Activated B cell treated with CpG ODN at 0.5 μM for 24 hours (primary cell): ENCODE measurements at regions of chr10 and their contacts with region 1.

Region 1: DNA sequence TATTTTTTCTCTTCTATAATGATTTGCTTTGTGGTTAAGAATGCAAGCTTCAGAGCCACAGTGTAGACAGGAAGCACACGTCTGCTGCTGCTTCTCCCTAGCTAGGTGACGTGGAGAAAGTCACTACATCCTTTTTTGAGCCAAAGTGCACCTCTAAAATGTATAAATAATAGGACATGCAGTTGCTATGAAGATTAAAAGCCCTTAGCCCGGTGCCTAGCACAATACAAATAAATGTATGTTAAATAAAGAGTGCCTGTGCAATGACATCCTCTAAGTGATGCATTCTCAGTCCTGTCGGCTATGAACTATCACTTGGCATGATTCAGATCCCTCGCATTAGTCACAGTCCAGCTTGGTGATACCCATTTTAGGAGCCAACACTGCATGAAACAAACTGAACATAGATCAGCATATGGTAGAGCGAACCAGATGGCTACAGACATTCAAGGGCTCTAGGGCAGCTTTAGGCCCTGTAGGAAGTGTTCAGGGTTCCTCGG is 4.8 kb upstream of the TRDMT1 start:
- DNase-seq: no peak
- ATAC-seq: peak; percentile 62
- H3K4me3 Mint-ChIP-seq: peak overlapping the region; percentile 13
- H3K27ac Mint-ChIP-seq: peak overlapping the region; percentile 88
- H3K4me1 Mint-ChIP-seq: peaks cover 29% of the 10 kb centered on the region
- H3K27me3 Mint-ChIP-seq: no peaks in the 10 kb centered on the region
- CTCF ChIP-seq: no peak

Region 2: DNA sequence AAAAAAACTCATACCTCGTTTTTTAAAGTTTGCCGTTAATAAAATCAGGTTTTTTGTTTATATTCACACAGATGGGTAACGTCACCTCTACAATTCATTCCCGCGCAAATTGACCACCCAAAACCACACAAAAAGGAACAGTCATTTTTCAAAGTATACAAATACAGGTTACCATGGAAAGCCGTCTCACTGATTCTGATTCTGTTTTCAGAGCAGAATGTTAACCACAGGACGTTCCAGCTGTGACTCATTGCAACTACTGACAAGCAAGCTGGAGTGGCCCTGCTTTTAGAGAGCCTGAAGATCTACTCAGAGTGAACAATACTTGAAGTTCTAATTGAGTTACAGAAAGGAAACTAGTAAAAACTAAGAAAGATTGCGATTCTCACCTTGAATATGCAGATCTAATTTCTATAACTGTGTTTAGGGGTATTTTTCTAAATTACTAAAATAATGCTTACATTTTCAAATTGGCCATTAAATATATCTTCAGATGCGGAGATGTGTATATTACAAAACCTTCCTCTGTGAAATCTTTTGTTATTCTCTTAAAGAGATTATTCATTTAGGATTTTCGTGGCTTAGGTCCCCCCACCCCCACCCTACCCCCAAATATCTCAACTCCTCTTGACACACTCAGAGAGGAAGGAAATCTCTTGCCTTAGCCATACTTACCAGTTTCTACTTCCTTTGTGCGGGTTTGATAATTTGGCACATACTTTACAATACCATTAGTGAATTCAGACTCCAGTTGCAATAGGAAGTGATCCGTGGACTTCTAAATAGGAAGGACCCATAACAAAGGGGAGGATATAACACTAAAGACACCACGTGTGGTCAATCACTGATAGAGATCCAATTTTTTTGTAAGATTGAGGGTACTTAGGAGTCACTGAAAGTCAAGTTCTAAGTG is 182.6 kb before region 1 on chr10:
- CTCF ChIA-PET with region 1: no interaction called
- POLR2A ChIA-PET with region 1: no interaction called
- intact Hi-C with region 1: loop called (anchors 1 kb)
- DNase-seq: no peak
- ATAC-seq: peak; percentile 78
- H3K4me3 Mint-ChIP-seq: peak overlapping the region; percentile 15
- H3K27ac Mint-ChIP-seq: peak overlapping the region; percentile 9
- H3K4me1 Mint-ChIP-seq: peaks cover 32% of the 10 kb centered on the region
- H3K27me3 Mint-ChIP-seq: peaks cover 2% of the 10 kb centered on the region
- CTCF ChIP-seq: no peak

Region 3: DNA sequence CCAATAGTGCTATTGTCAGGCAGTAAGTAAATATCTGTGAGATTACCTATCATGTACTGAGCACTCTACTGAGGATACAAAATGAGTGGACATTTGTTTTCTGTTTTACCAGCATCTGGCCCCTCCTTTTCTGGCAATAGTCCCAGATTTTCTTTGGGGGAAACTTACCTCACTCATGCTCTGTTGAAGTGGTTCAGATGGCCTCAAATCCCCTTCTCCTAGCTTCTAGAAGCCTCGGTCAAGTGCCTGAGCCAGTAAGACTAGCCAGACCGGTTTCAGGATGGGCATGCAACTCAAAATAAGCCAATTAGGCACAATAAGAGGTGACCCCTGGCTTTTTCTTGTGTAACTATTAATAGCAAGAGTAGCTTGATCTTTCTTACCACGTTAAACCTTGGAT is 24.5 kb before region 1 on chr10:
- CTCF ChIA-PET with region 1: no interaction called
- POLR2A ChIA-PET with region 1: interaction called, 10 read pairs
- intact Hi-C with region 1: loop called (anchors 2 kb)
- DNase-seq: no peak
- ATAC-seq: no peak
- H3K4me3 Mint-ChIP-seq: no peak overlapping the region
- H3K27ac Mint-ChIP-seq: no peak overlapping the region
- H3K4me1 Mint-ChIP-seq: peaks cover 6% of the 10 kb centered on the region
- H3K27me3 Mint-ChIP-seq: no peaks in the 10 kb centered on the region
- CTCF ChIP-seq: no peak

Region 4: DNA sequence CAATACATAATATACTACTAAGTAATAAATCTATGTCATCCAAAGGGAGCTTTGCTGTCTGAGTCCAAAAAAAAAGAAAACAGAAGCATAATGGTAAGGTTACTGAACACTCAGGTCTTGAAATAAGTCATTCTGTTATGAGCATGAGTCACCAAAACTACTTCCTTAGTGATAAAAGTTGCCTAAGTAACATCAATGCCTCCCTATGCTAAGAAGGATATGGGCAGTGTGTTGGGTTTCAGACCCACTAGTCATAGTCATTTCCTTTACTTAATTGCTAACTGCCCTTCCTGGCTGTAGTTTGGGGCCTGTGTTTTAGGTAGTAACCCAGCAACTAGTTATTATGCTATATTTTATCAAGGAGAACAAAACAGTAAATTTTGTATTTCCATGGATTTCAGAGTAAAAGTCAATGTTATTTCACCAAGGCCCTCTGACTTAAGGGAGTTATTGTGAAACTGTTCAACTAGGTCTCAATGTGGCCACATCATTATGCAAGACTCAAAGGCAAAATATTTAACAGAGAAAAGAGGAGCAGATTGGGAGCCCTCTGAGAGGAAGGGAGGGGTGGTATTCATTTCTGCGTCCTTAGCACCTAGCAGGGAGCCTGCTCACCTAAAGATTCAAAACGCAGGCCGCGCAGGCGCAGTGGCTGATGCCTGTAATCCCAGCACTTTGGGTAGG is 10.1 kb after region 1 on chr10:
- CTCF ChIA-PET with region 1: interaction called, 5 read pairs
- POLR2A ChIA-PET with region 1: interaction called, 14 read pairs
- intact Hi-C with region 1: loop called (anchors 1 kb)
- DNase-seq: no peak
- ATAC-seq: peak; percentile 96
- H3K4me3 Mint-ChIP-seq: peak overlapping the region; percentile 46
- H3K27ac Mint-ChIP-seq: peak overlapping the region; percentile 90
- H3K4me1 Mint-ChIP-seq: peaks cover 24% of the 10 kb centered on the region
- H3K27me3 Mint-ChIP-seq: no peaks in the 10 kb centered on the region
- CTCF ChIP-seq: no peak